Head of caudate nucleus (tissue), 42 donors: ENCODE measurements at regions of chr3 and their contacts with region 1.

Region 1: DNA sequence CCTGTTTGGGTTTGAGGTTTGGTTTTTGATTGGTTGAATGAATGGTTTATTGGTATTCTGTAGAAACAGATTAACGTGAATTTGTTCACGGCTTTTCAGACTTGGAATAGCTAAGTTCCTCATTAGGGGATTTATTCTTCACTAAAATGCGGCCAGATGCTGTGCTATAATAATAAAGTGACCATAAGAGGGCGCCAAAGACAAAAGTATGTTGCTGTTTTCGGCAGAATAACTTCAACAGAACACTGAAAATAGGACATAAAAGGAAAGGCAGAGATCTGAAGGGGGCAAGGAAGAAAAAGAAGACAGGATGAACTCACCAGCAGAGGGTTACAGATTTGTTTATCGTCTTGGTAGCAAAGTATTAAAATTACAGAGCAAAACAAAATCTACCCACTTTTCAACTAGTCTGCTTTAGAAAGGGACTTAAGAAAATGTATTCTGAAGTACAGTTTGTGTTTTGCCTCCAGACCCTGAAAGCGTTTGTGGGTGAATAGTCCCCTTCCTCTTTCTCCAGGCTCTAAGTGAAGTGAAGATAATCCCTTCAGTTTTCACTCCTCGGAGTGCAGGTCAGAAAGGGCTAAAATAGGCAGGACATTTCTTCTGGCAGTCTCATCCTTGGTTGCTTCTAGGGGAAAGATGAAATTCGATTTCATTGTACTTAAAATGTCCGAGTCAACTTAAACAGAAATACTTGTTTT is 147.6 kb downstream of the IL20RB start:
- DNase-seq: peak in 23 of 42 donors; percentile 12 to 76 (median 38)

Region 2: GRCh38 chr3:137970914-137971831 is 865.7 kb after region 1 on chr3:
- intact Hi-C with region 1: loop called (anchors 10 kb)
- DNase-seq: peak; percentile 59 to 89 (median 80)